Activated T-helper 2 cell treated with anti-CD3 and anti-CD28 coated beads, Interferon-gamma antibody, Interleukin-2, Interleukin-4, amounts not matched to agents 10 μg/mL and 5 μg/mL and 100 μg/mL, durations not matched to agents 14 hours and 24 hours and 36 hours (primary cell): ENCODE measurements at regions of chr2 and their contacts with region 1.

Region 1: DNA sequence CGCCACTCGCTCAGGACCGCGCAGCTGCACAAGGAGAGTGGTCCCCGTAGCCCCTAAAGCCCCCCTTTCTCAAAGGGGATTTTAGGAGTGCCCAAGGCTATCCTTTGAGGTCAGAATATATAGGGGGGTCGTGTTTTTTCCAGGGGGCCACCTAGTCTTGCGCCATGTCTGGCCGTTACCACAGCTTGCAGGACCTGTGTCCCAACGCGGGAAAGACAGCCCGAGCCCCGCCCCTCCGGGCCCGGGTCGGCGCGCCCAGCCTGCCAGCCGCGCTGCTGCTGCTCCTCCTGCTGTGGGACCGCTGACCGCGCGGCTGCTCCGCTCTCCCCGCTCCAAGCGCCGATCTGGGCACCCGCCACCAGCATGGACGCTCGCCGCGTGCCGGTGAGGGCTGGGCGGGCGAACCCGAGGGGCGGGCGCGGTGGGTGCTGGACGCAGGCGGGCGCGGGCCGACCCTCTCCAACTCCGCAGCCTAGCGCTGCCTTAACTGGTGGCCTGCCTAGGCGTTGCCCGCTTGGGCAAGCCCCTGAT is at the start of gene CDCA7:
- DNase-seq: peak; percentile 79
- H3K4me3 Mint-ChIP-seq: peak within 1 kb of the TSS; percentile 92
- H3K27ac Mint-ChIP-seq: peak within 1 kb of the TSS; percentile 98
- H3K4me1 Mint-ChIP-seq: peaks cover 59% of the 10 kb centered on the region
- H3K27me3 Mint-ChIP-seq: peaks cover 8% of the 10 kb centered on the region
- total RNA-seq, gene CDCA7: 128 and 129 TPM in 2 replicates

Region 2: GRCh38 chr2:173027181-173028128 is 327.2 kb before region 1 on chr2:
- intact Hi-C with region 1: loop called (anchors 10 kb)
- DNase-seq: peak; percentile 60
- H3K4me3 Mint-ChIP-seq: no peak overlapping the region
- H3K27ac Mint-ChIP-seq: no peak overlapping the region
- H3K4me1 Mint-ChIP-seq: peaks cover 4% of the 10 kb centered on the region
- H3K27me3 Mint-ChIP-seq: peaks cover 17% of the 10 kb centered on the region

Region 3: DNA sequence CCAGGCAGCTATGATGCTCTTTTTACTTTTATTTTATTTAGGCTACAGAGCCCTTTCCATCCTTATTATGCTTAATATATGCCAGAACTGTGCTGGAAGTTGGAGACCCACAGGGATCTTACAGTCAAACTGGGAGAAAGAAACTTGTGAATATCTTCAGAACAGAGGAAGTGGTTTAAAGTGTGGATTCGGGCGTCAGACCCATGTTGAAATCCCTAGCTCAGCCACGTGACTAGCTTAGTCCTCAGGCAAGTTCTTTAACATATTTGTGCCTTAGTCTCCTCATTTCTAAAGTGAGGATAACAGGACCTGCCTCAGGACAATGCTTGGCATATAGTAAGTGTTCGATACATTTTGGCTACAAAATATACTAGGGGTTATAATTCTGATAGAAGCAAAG is 220.0 kb before region 1 on chr2:
- intact Hi-C with region 1: loop called (anchors 1 kb)
- DNase-seq: no peak
- H3K4me3 Mint-ChIP-seq: no peak overlapping the region
- H3K27ac Mint-ChIP-seq: peak overlapping the region; percentile 74
- H3K4me1 Mint-ChIP-seq: peaks cover 73% of the 10 kb centered on the region
- H3K27me3 Mint-ChIP-seq: peaks cover 5% of the 10 kb centered on the region

Region 4: DNA sequence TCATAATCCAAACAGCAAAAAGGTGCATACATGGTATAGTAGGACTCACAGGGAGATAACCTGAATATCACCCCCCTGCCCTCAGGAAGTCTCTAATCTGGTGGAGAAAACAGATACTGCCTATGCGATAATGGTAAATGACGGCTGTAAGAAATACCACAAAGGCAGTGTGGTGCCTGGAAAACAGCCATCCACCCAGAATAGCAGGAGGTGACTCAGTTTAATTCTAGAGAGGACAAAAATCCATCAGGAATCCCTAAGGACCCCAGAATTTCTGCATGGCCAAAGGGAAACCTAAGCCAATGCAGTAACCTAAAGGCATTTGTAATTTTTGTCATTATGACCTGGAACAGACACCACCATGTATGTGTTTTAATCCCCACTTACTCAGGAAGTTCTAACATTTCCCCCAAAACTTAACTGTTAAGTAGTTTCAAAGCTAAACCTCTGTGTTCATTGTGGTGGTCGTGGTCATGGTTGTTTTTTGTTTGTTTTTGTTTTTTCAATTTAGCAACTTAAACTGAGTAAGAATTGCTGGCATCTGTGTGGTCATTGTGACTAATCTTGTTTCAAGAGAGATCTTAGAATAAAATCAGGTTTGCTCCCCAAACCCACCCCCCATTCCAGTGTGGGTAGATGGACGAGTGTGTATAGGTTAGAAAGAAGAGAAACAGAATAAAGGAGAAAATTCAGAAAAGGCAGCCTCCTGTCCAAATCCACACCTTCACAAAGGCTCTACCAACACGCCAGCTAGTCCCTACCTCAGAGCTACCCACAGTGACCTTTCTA is 121.5 kb before region 1 on chr2:
- intact Hi-C with region 1: loop called (anchors 1 kb)
- DNase-seq: no peak
- H3K4me3 Mint-ChIP-seq: no peak overlapping the region
- H3K27ac Mint-ChIP-seq: peak overlapping the region; percentile 1
- H3K4me1 Mint-ChIP-seq: peaks cover 10% of the 10 kb centered on the region
- H3K27me3 Mint-ChIP-seq: peaks cover 6% of the 10 kb centered on the region

Region 5: GRCh38 chr2:173264603-173265366 is 89.9 kb before region 1 on chr2:
- intact Hi-C with region 1: loop called (anchors 1 kb)
- DNase-seq: peak; percentile 22
- H3K4me3 Mint-ChIP-seq: peak overlapping the region; percentile 24
- H3K27ac Mint-ChIP-seq: peak overlapping the region; percentile 65
- H3K4me1 Mint-ChIP-seq: peaks cover 15% of the 10 kb centered on the region
- H3K27me3 Mint-ChIP-seq: peaks cover 5% of the 10 kb centered on the region

Region 6: GRCh38 chr2:173370198-173370597 is 15.5 kb after region 1 on chr2:
- intact Hi-C with region 1: loop called (anchors 1 kb)
- DNase-seq: no peak
- H3K4me3 Mint-ChIP-seq: no peak overlapping the region
- H3K27ac Mint-ChIP-seq: peak overlapping the region; percentile 80
- H3K4me1 Mint-ChIP-seq: peaks cover 32% of the 10 kb centered on the region
- H3K27me3 Mint-ChIP-seq: no peaks in the 10 kb centered on the region

Region 7: DNA sequence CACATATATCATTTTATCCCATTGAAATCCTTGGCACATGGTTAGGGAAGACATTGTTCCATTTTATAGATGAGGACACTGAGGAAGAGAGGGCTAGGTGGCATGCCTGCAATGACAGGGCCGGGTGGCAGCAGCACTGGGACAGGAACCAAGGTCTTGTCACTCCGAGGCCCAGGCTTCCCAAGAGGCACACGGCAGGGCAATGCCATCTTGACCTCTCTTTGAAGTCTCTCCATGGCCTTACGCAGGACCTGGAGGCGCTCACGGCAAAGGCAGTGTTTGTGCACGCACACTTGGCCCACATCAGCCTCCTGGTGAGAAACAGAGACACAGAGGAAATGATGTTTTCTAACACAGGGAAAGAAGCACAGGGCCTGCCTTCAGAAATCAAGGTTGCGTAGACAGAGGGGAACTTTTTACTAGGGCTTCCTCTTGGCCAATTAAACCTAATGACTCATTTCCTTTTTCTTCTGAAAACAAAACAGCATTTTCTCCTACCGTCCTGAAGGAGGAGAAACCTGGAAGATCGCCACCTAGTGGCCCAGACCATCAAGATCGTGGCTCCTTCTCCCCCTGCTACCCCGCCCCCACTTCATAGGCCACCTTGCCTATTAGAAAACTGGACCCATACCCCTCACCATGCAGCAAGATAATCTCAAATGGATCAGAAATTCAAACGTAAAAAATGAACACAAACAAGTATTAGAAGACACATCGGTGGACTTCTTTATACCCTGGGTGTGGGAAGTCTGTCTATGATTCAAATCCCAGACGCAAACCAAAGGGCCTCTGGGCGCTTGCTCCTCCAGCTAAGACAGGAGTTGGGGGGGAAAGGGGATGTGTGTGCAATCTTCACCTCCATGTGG is 685.1 kb after region 1 on chr2:
- intact Hi-C with region 1: loop called (anchors 5 kb)
- DNase-seq: peak; percentile 74
- H3K4me3 Mint-ChIP-seq: peak overlapping the region; percentile 30
- H3K27ac Mint-ChIP-seq: peak overlapping the region; percentile 88
- H3K4me1 Mint-ChIP-seq: peaks cover 22% of the 10 kb centered on the region
- H3K27me3 Mint-ChIP-seq: no peaks in the 10 kb centered on the region